ENCODE measurements at regions of chr1 and their contacts with region 1.

Region 1: GRCh38 chr1:107936498-107937481 is 28.2 kb downstream of the VAV3 start:
- DNase-seq: peak; percentile 84
- H3K4me3 ChIP-seq: no peak overlapping the region
- H3K27ac ChIP-seq: peak overlapping the region; percentile 34
- H3K4me1 ChIP-seq: peaks cover 35% of the 10 kb centered on the region
- H3K27me3 ChIP-seq: no peaks in the 10 kb centered on the region
- CTCF ChIP-seq: no peak

Region 2: DNA sequence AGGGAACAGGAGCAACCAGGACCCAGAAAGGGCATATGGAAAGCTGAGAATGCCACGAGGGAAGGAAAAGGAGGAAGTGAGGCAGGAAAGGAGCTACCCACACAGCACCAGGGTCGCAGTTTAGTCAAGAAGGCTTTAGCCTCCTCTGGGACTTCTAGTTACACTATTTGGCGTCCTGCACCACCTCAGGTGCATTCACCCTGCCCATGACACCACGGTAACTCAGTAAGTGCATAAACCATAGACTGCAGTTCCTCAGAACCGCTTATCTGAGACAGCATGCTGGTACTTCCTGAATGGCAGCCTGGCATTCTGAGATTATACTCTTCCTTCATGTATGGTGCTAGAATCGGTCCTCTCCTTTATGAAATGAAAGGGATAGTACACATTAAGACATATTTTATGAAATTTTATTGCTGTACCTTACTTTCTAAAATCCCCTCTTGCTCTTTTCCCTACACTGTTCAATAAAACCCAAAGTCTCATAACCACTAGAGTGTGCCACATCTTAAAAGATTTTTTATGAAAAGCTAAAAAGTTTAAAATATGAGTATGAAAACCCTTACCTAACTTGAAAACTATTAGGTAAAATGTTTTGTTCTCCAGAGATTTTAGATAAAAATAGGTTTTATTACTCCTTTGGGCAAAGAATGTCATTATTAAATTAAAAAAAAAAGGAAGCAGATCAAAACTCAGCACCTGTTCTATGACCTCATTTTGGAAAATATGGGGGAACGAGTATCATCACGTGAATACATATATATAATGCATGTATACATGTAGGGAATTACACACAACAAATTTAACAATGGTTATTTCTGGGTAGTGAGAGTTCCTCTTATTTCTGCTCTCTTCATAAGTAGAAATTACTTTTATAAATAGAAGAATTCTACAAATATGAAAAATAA is 39.1 kb before region 1 on chr1:
- CTCF ChIA-PET with region 1: no interaction called
- POLR2A ChIA-PET with region 1: no interaction called
- intact Hi-C with region 1: loop called (anchors 2 kb)
- DNase-seq: no peak
- H3K4me3 ChIP-seq: no peak overlapping the region
- H3K27ac ChIP-seq: no peak overlapping the region
- H3K4me1 ChIP-seq: peaks cover 4% of the 10 kb centered on the region
- H3K27me3 ChIP-seq: no peaks in the 10 kb centered on the region
- CTCF ChIP-seq: no peak